ENCODE measurements at regions of chr6 and their contacts with region 1.

Region 1: DNA sequence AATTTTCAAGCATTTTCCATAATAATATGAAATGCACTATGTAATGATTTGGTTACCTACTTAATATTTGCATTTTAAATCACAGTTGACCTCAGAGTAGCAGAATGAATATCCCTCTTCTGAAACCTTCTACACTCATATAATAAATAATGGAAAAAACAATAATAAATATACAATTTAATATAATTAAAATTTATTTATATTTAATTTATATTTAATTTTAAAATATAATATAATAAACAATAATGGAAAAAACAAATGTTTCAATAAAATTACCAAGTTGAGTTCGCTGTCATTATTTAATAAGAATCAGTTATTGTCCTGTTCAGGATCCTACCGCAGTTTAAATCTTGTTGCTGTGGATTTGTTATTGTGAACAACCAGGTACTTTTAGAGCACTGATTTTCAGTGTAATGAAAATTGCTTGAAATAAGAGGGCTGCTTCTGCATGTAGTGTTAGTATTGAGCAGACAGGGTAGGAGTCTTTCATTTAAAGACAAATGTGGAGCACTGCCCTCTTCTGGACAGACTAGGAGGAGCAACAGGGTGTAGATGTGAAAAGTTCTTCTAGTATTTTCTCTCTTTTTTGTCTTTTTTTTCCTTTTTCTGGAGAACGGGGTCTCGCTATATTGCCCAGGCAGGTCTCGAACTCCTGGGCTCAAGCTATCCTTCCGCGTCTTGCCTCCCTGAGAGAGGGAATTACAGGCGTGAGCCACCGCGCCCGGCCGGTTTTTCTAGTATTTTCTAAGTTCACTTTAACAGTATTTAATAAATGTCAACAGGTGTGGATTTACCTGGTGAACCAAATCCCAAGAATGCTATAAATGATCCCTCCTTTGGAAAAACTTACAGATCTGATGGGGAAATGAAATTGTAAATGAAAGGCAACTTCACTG is 13.6 kb downstream of the TRAPPC3L start:
- DNase-seq: peak; percentile 67
- ATAC-seq: peak; percentile 54
- H3K4me3 ChIP-seq: no peak overlapping the region
- H3K27ac ChIP-seq: no peak overlapping the region
- H3K4me1 ChIP-seq: peaks cover 24% of the 10 kb centered on the region
- H3K27me3 ChIP-seq: no peaks in the 10 kb centered on the region
- CTCF ChIP-seq: peak; percentile 66

Region 2: DNA sequence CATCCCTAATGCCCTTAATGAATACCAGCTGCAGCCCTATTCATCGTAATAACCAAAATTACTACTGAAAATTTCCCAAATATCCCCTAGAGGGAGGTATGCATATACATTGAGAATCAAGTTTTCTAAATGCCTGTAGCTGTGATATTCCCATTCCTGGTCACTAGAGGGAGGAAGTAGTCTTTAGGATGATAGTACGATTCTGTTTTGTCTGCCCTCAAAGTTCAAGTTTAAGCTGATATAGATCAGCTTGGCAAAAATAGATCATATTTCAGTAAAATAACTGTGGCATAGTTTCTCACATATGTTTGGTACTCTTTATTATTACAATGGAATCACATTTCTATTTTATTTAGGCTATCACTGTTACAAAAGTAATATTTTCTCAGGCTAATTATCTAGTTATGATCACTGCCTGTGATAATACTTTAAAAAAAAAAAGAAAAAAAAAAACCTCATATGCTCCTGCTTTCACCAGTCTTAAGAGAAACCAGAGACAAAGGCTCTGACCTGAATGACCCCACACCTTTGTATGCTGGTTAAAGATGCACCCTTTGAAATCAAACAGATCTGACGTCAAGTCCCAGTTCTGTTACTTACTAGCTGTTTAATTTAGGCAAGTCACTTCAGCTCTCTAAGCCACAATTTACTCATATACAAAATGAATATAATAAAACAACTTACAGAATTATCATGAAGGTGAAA is 263.2 kb before region 1 on chr6:
- CTCF ChIA-PET with region 1: interaction called, 7 read pairs
- POLR2A ChIA-PET with region 1: no interaction called
- intact Hi-C with region 1: loop called (anchors 5 kb)
- DNase-seq: peak; percentile 85
- ATAC-seq: peak; percentile 51
- H3K4me3 ChIP-seq: no peak overlapping the region
- H3K27ac ChIP-seq: no peak overlapping the region
- H3K4me1 ChIP-seq: peaks cover 13% of the 10 kb centered on the region
- H3K27me3 ChIP-seq: no peaks in the 10 kb centered on the region
- CTCF ChIP-seq: peak; percentile 88

Region 3: DNA sequence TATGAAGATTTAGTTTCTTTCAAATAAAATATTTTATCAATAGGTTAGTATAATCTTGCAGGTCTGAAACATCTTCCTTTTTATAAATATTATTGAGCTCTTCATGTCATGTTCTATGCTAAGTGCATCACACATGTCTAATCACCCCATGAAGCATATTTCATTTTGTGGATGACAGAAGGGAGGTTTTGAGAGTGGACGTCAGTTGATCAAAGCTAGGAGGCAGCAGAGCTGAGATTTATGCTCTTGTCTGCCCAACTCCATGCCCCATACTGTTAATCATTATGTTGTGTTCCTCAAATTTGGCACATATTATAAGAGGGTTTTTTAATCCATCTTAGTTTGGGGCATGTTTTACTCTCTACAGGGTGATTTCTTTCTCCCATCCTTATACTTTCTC is 138.5 kb before region 1 on chr6:
- CTCF ChIA-PET with region 1: no interaction called
- POLR2A ChIA-PET with region 1: no interaction called
- intact Hi-C with region 1: no loop called
- DNase-seq: no peak
- ATAC-seq: no peak
- H3K4me3 ChIP-seq: no peak overlapping the region
- H3K27ac ChIP-seq: no peak overlapping the region
- H3K4me1 ChIP-seq: peaks cover 20% of the 10 kb centered on the region
- H3K27me3 ChIP-seq: no peaks in the 10 kb centered on the region
- CTCF ChIP-seq: no peak

Region 4: DNA sequence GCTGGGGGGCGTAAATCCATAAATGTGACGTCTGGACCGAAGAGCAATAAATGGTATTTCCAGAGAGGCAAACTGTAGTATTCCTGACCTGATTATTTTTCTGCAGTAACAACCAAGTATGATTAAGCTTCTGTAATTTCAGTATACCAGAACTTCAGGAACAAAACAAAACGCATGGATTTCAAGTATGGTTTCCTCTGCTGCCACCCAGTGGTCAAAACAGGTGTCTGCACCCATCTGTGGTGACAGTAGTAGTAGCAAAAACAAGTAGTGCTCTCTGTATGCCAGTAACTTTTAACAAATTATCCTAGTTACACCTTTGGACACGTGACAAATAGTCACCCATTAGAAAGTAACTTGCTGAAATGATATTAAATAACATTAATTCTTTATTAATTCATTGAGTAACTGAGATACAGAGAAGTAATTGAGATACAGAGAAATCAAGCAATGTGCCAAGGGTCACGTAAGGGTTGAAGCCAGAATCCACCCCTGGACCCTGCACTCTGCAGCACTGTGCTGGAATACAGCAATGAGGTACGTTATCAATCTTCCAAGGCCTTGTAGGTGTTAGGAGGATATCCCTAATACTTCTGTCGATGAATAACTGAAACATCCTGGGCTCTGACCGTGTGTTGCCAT is 29.6 kb after region 1 on chr6:
- CTCF ChIA-PET with region 1: no interaction called
- POLR2A ChIA-PET with region 1: no interaction called
- intact Hi-C with region 1: loop called (anchors 1 kb)
- DNase-seq: peak; percentile 77
- ATAC-seq: peak; percentile 64
- H3K4me3 ChIP-seq: no peak overlapping the region
- H3K27ac ChIP-seq: no peak overlapping the region
- H3K4me1 ChIP-seq: peaks cover 17% of the 10 kb centered on the region
- H3K27me3 ChIP-seq: no peaks in the 10 kb centered on the region
- CTCF ChIP-seq: peak; percentile 84

Region 5: DNA sequence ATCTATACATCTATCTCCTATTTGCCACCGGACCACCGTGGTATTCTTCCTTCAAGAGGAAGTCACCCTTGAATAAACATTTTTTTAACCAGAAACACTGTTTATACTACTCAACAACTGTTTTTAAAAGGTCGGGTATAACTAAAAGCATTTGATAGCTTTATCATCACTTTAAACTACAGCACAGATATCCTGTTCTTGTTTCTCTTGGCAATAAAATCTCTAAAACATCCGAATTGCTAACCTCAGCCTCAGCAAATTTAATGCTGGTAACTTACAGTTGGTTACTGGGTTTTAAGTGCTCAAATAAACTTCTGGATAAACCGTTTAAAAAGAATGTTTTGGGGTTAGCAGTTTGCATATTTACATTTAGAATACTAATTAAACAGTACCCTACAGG is 116.2 kb after region 1 on chr6:
- CTCF ChIA-PET with region 1: interaction called, 3 read pairs
- POLR2A ChIA-PET with region 1: no interaction called
- intact Hi-C with region 1: loop called (anchors 1 kb)
- DNase-seq: no peak
- ATAC-seq: no peak
- H3K4me3 ChIP-seq: no peak overlapping the region
- H3K27ac ChIP-seq: no peak overlapping the region
- H3K4me1 ChIP-seq: no peaks in the 10 kb centered on the region
- H3K27me3 ChIP-seq: no peaks in the 10 kb centered on the region
- CTCF ChIP-seq: no peak